ENCODE measurements at regions of chr22 and their contacts with region 1.

Region 1: GRCh38 chr22:30289134-30289979 is at the start of gene CASTOR1:
- DNase-seq: peak; percentile 98
- CTCF ChIP-seq: no peak

Region 2: DNA sequence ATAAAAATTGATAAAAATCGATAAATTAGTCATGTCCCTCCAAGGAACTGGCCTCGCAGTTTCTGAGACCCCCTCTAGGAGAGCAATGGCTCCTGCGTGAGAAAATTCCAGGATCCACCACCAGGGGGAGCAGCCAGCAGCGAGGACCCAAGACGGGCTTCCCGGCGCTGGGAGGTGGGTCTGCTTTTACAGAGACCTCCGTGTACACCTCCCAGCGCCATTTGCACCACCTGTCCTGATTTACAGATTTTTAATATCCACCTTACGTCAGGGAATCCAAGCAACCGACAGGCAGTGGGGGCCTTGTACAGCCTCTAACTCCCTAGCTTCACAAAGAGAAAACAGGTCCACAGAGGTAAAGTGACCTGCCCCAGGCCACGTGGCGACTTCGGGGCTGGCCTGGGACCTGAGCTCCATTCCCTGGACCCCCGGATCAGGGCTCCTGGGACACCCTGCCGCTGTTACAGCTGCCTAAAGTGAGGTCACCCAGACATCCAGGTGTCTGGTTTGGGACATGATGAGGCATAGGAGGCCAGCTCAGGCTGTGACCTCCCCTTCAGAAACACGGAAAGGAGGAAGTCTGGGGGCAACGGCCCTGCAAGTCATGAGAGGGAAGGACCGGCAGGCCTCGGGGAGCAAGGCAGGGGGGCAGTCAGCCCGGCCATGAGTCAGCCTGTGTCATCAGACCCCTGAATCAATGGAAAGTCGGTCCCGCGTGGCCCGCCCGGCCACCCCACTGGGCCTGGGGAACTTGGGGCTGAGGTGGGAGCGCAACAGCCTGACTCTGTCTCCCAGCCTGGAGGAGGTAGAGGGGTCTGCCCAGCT is 26.2 kb before region 1 on chr22:
- CTCF ChIA-PET with region 1: interaction called, 171 read pairs
- POLR2A ChIA-PET with region 1: no interaction called
- DNase-seq: peak; percentile 76
- CTCF ChIP-seq: peak; percentile 90

Region 3: GRCh38 chr22:30326706-30327362 is 37.5 kb after region 1 on chr22 and contains the start of gene TBC1D10A:
- CTCF ChIA-PET with region 1: interaction called, 55 read pairs
- POLR2A ChIA-PET with region 1: interaction called, 7 read pairs
- DNase-seq: peak; percentile 100
- CTCF ChIP-seq: no peak

Region 4: GRCh38 chr22:30356449-30357235 is 67.3 kb after region 1 on chr22 and contains the starts of genes CCDC157 and SF3A1:
- CTCF ChIA-PET with region 1: interaction called, 20 read pairs
- POLR2A ChIA-PET with region 1: no interaction called
- DNase-seq: peak; percentile 97
- CTCF ChIP-seq: no peak

Region 5: GRCh38 chr22:30373331-30374325 is 84.3 kb after region 1 on chr22:
- CTCF ChIA-PET with region 1: interaction called, 19 read pairs
- POLR2A ChIA-PET with region 1: no interaction called
- DNase-seq: no peak
- CTCF ChIP-seq: no peak

Region 6: GRCh38 chr22:30402028-30402765 is 112.8 kb after region 1 on chr22:
- CTCF ChIA-PET with region 1: interaction called, 42 read pairs
- POLR2A ChIA-PET with region 1: no interaction called
- DNase-seq: no peak
- CTCF ChIP-seq: no peak

Measured in GM10248 (cell line).